ENCODE measurements at regions of chrX and their contacts with region 1.

Region 1: DNA sequence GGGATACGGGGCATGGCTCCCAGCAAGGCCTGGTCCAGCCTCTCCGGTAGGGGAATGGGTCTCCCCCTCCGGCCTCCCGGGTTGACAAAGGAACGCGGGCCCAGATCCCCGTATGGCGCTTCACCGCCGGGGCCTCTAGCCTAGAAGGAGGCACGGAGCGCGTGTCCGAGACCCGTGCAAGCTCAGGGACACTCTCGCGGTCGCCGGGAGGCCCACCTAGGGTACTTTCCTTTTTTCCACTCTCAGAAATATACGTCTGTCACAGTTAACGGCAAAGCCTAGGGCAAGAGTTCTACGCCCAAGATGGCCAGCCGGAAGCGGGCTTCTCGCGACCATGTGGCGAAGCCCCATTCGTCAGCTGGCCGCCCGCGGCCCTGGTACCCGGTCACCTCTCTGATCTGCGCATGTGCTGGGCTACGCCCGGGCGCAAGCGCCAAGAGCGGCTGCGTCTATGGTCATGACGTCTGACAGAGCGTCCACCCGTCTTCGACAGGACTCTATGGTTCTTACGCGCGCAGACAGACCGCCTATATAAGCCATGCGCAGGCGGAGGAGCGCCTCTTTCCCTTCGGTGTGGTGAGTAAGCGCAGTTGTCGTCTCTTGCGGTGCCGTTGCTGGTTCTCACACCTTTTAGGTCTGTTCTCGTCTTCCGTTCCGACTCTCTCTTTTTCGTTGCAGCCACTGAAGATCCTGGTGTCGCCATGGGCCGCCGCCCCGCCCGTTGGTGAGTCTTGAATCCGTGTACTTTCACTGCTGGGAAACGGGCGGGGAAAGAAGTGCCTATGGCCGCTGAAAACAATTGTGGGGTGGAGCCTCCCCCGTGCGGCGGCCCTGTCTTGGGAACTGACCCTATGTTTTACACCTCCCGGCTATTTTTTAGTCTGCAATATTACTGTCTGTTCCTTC is at the start of gene RPL10:
- DNase-seq: peak; percentile 94
- ATAC-seq: peak; percentile 76
- H3K4me3 ChIP-seq: peak within 1 kb of the TSS; percentile 63 to 96 (median 78)
- H3K4me3 Mint-ChIP-seq: peak within 1 kb of the TSS; percentile 99
- H3K27ac ChIP-seq: peak within 1 kb of the TSS; percentile 99 to 100
- H3K27ac Mint-ChIP-seq: peak within 1 kb of the TSS; percentile 99
- H3K4me1 ChIP-seq: peaks cover 12 to 20% of the 10 kb centered on the region in 2 donors
- H3K4me1 Mint-ChIP-seq: peaks cover 17% of the 10 kb centered on the region
- H3K27me3 ChIP-seq: no peaks in the 10 kb centered on the region
- H3K27me3 Mint-ChIP-seq: no peaks in the 10 kb centered on the region
- CTCF ChIP-seq: no peak
- total RNA-seq, gene RPL10: 3,946 and 4,073 TPM in 2 replicates

Region 2: DNA sequence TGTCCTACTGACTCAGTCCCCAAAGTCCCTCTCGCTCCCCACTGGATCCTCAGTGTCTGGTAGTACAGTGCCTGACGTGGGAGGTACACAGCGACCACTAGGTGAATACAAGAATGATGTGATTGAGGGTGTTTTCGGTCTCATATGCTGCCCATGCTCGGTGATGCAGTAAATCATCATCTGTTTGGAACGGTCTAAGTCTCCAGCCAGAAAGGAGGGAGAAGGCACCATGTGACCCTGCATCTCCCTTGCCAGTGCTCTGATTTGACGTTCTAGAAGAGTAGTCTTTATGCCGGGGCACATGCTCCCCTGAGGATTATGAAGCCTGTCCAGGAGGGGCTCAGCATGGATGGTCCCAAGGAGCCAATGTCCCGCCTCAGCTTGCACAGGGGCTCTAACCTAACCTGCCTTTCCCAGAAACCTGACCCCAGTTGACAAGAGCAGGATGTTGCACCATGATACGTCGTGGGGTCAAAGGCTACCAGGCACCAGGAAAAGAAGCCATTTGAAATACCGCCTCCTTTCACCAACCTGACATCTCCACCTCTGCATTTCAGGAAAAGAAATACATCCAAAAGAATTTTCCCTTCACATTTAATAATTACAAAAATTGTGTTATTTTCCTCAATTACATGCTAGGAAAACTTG is 647.8 kb before region 1 on chrX:
- CTCF ChIA-PET with region 1: no interaction called
- POLR2A ChIA-PET with region 1: no interaction called
- intact Hi-C with region 1: no loop called
- DNase-seq: no peak
- ATAC-seq: no peak
- H3K4me3 ChIP-seq: no peak overlapping the region
- H3K4me3 Mint-ChIP-seq: no peak overlapping the region
- H3K27ac ChIP-seq: no peak overlapping the region
- H3K27ac Mint-ChIP-seq: no peak overlapping the region
- H3K4me1 ChIP-seq: peaks cover 5 to 12% of the 10 kb centered on the region in 2 donors
- H3K4me1 Mint-ChIP-seq: peaks cover 17% of the 10 kb centered on the region
- H3K27me3 ChIP-seq: no peaks in the 10 kb centered on the region
- H3K27me3 Mint-ChIP-seq: no peaks in the 10 kb centered on the region
- CTCF ChIP-seq: no peak

Region 3: DNA sequence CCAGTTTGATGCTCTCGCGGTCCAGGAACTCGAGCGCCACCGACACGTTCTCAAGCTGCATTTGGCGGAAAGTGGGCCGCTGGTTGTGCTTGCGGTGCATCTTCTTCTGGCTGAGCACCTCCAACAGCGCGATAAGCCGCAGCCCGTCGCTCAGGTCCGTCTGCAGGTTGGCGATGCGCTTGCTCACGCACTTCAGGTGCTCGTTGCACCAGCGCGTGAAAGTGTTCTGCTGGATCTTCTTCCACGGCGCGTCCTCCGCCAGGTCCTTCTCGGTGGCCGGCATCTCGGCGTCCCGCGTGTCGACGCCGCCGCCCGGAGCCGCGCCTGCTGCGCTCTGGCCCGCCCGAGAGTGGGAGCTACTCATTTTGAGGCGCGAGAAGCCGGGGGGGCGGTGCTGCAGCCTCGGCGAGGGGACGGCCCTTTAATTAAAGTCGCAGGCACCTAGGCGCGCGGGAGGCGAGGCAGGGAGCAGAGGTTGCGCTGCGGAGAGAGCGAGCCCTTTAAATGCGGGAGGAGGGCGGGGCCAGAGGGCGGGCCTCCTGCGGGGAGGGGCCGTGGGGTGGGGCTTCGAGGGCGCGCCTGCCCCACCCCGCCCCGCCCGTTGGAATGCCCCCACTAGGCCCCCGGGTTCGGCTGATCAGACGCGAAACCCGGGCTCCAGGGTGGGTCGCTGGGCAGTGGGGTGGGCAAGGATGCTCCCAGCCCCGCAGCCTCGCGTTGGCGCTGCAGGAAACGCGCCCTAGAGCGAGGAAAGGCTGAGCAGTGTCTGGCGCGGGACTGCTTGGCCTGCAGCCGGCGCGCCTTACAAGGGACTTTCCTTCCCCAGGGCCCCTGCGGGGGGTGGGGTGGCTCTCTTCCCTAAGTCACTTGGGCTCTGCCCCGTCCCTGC is 26.9 kb before region 1 on chrX:
- CTCF ChIA-PET with region 1: interaction called, 10 read pairs
- POLR2A ChIA-PET with region 1: interaction called, 14 read pairs
- intact Hi-C with region 1: no loop called
- DNase-seq: peak; percentile 94
- ATAC-seq: peak; percentile 63
- H3K4me3 ChIP-seq: peak overlapping the region; percentile 24 to 81 (median 75)
- H3K4me3 Mint-ChIP-seq: peak overlapping the region; percentile 85
- H3K27ac ChIP-seq: peak overlapping the region; percentile 60 to 86
- H3K27ac Mint-ChIP-seq: peak overlapping the region; percentile 88
- H3K4me1 ChIP-seq: peaks cover 32 to 56% of the 10 kb centered on the region in 2 donors
- H3K4me1 Mint-ChIP-seq: peaks cover 25% of the 10 kb centered on the region
- H3K27me3 ChIP-seq: no peaks in the 10 kb centered on the region
- H3K27me3 Mint-ChIP-seq: no peaks in the 10 kb centered on the region
- CTCF ChIP-seq: no peak

Region 4: GRCh38 chrX:154378782-154379591 is 19.1 kb before region 1 on chrX and contains the start of gene EMD:
- CTCF ChIA-PET with region 1: interaction called, 10 read pairs
- POLR2A ChIA-PET with region 1: interaction called, 14 read pairs
- intact Hi-C with region 1: no loop called
- DNase-seq: peak; percentile 98
- ATAC-seq: peak; percentile 79
- H3K4me3 ChIP-seq: peak within 1 kb of the TSS in 4 of 5 experiments; percentile 67 to 83 (median 72)
- H3K4me3 Mint-ChIP-seq: peak within 1 kb of the TSS; percentile 86
- H3K27ac ChIP-seq: peak within 1 kb of the TSS; percentile 90 to 99
- H3K27ac Mint-ChIP-seq: peak within 1 kb of the TSS; percentile 92
- H3K4me1 ChIP-seq: peaks cover 21 to 33% of the 10 kb centered on the region in 2 donors
- H3K4me1 Mint-ChIP-seq: peaks cover 24% of the 10 kb centered on the region
- H3K27me3 ChIP-seq: no peaks in the 10 kb centered on the region
- H3K27me3 Mint-ChIP-seq: no peaks in the 10 kb centered on the region
- CTCF ChIP-seq: no peak
- total RNA-seq, gene EMD: 67.2 and 81.7 TPM in 2 replicates

Region 5: GRCh38 chrX:154411322-154411980 is 13.4 kb after region 1 on chrX and contains the start of gene TAFAZZIN:
- CTCF ChIA-PET with region 1: interaction called, 7 read pairs
- POLR2A ChIA-PET with region 1: interaction called, 31 read pairs
- intact Hi-C with region 1: no loop called
- DNase-seq: peak; percentile 77
- ATAC-seq: peak; percentile 66
- H3K4me3 ChIP-seq: peak within 1 kb of the TSS in 4 of 5 experiments; percentile 59 to 79 (median 70)
- H3K4me3 Mint-ChIP-seq: peak within 1 kb of the TSS; percentile 90
- H3K27ac ChIP-seq: peak within 1 kb of the TSS; percentile 73 to 79
- H3K27ac Mint-ChIP-seq: peak within 1 kb of the TSS; percentile 90
- H3K4me1 ChIP-seq: peaks cover 8 to 38% of the 10 kb centered on the region in 2 donors
- H3K4me1 Mint-ChIP-seq: peaks cover 31% of the 10 kb centered on the region
- H3K27me3 ChIP-seq: no peaks in the 10 kb centered on the region
- H3K27me3 Mint-ChIP-seq: no peaks in the 10 kb centered on the region
- CTCF ChIP-seq: no peak
- total RNA-seq, gene TAFAZZIN: 117 and 118 TPM in 2 replicates

Region 6: DNA sequence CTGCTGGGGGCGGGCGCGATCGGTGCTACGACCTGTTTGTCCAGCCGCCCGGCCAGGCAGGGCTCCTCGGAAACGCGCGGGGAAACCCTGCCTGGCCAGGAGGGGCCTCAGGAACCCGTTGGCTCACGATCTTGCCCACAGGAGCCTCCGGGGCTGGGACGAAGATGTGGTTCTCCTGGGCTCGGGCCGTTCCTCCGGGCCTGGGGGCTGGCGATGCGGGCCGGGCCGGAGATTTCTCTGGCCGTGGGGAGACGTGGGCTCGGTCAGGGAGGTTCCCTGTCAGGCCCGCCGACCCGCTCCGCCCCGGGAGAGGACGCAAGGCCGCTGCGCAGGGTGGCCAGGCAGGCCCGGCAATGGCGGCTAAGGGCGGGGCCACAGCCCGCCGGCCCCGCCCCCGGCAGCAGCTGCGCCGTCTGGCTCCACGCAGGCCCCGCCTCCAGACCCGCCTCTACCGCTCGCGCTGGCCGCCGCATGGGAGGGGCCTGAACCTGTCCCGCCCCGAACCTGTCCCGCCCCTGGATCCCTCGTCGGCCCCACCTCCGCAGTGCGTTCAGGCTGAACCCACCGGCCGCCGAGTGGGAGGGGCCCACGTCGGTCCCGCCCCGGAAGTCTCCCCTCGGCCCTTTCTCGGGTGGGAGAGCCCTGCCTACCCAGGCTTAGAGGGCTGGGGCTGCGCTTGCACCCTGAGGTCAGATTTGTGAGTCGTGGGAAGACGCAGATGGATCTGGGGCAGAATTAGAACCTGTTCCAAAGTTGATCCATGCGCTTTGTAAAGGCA is 118.0 kb after region 1 on chrX and contains the start of gene FAM3A:
- CTCF ChIA-PET with region 1: interaction called, 4 read pairs
- POLR2A ChIA-PET with region 1: interaction called, 12 read pairs
- intact Hi-C with region 1: loop called (anchors 5 kb)
- DNase-seq: peak; percentile 89
- ATAC-seq: peak; percentile 97
- H3K4me3 ChIP-seq: peak within 1 kb of the TSS; percentile 36 to 75 (median 67)
- H3K4me3 Mint-ChIP-seq: peak within 1 kb of the TSS; percentile 89
- H3K27ac ChIP-seq: peak within 1 kb of the TSS; percentile 71 to 73
- H3K27ac Mint-ChIP-seq: peak within 1 kb of the TSS; percentile 94
- H3K4me1 ChIP-seq: peaks cover 4 to 22% of the 10 kb centered on the region in 2 donors
- H3K4me1 Mint-ChIP-seq: peaks cover 18% of the 10 kb centered on the region
- H3K27me3 ChIP-seq: no peaks in the 10 kb centered on the region
- H3K27me3 Mint-ChIP-seq: no peaks in the 10 kb centered on the region
- CTCF ChIP-seq: no peak
- total RNA-seq, gene FAM3A: 39.6 and 43.3 TPM in 2 replicates

Region 7: GRCh38 chrX:154534862-154535670 is 137.0 kb after region 1 on chrX:
- CTCF ChIA-PET with region 1: interaction called, 17 read pairs
- POLR2A ChIA-PET with region 1: interaction called, 11 read pairs
- intact Hi-C with region 1: no loop called
- DNase-seq: peak; percentile 88
- ATAC-seq: peak; percentile 99
- H3K4me3 ChIP-seq: no peak overlapping the region
- H3K4me3 Mint-ChIP-seq: no peak overlapping the region
- H3K27ac ChIP-seq: peak overlapping the region in 1 of 2 donors; percentile 44
- H3K27ac Mint-ChIP-seq: peak overlapping the region; percentile 74
- H3K4me1 ChIP-seq: peaks cover 4 to 8% of the 10 kb centered on the region in 2 donors
- H3K4me1 Mint-ChIP-seq: peaks cover 5% of the 10 kb centered on the region
- H3K27me3 ChIP-seq: no peaks in the 10 kb centered on the region
- H3K27me3 Mint-ChIP-seq: no peaks in the 10 kb centered on the region
- CTCF ChIP-seq: peak; percentile 86

Measured in B cell (primary cell).